Activated CD8-positive, alpha-beta memory T cell treated with anti-CD3 and anti-CD28 coated beads, Interleukin-2, amount 10 ng/mL, durations not matched to agents 7 days and 5 days (primary cell): ENCODE measurements at regions of chr6 and their contacts with region 1.

Region 1: DNA sequence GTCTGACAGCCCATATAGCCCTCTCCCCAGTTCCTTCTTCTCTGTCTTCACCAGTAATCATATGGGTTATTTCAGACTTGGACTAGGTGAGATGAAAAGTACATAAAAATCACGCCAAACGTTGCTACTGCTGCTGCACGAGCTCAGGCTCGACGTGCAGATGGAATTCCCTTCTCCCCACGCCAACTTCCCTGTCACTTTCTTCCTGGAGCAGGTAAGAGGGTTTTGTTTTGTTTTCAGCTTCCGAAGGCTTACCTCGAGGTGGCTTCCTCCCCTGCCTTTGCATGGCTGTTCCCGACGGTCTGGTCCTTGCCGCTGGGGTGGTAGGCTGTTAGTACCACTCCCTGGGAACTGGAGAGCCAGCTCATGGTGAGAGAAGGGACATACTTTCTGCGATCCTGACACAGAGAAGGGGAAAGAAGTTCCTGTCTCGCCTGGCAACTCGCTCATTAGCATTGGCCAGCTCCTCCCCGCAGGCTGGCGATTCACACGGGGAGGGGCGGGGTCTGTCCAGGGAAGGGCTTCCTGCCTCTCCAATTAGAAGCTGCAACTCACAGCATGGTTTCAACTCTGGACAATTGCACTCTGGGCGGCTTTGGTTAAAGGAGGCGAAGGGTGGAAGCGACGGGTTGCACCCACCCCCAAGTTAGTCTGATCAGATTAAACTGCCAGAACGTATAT is at the start of gene ARHGAP18:
- DNase-seq: peak; percentile 90
- ATAC-seq: peak; percentile 97
- H3K4me3 Mint-ChIP-seq: peak within 1 kb of the TSS; percentile 92
- H3K27ac Mint-ChIP-seq: peak within 1 kb of the TSS; percentile 87
- H3K4me1 Mint-ChIP-seq: peaks cover 49% of the 10 kb centered on the region
- H3K27me3 Mint-ChIP-seq: no peaks in the 10 kb centered on the region
- total RNA-seq, gene ARHGAP18: 14.1 to 20.8 TPM

Region 2: GRCh38 chr6:129672881-129673643 is 36.8 kb before region 1 on chr6:
- CTCF ChIA-PET with region 1: interaction called, 10 read pairs
- DNase-seq: peak; percentile 62
- ATAC-seq: peak; percentile 69
- H3K4me3 Mint-ChIP-seq: peak overlapping the region; percentile 71
- H3K27ac Mint-ChIP-seq: peak overlapping the region; percentile 95
- H3K4me1 Mint-ChIP-seq: peaks cover 55% of the 10 kb centered on the region
- H3K27me3 Mint-ChIP-seq: no peaks in the 10 kb centered on the region

Region 3: DNA sequence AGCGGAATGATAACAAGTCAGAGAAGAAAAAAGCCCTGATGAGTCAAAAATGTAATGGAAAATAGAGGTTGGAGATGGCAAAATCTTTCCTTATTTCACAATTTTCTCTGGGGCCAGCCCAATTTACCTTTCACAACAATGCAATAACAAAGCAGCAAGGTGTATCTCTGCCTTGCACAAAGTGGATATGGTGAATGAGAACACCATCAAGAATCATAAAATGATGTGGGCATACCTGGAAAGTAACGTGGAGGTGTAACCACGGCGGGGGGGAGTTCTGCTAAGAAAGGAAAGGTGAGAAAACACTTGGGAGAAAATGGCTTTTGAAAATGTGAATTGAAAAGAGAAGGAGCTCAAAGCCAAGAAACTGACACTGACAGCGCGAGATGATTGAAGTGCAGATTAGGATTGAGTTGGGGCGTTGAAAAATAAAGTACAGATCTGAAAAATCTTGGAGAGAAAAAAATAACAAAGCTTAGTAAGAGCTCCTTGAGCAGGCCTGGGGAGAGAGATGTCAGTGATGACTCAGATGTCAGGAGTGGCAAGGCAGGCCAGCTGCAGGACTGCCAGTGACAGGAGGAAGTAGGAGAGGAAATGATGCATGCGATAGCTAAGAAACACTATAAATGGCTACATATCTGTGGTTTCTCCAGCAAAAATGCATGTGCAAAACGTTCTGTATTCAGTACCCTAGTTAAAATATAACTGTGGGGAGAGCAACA is 26.1 kb before region 1 on chr6:
- CTCF ChIA-PET with region 1: interaction called, 26 read pairs
- DNase-seq: peak; percentile 84
- ATAC-seq: peak; percentile 95
- H3K4me3 Mint-ChIP-seq: peak overlapping the region; percentile 41
- H3K27ac Mint-ChIP-seq: peak overlapping the region; percentile 87
- H3K4me1 Mint-ChIP-seq: peaks cover 63% of the 10 kb centered on the region
- H3K27me3 Mint-ChIP-seq: no peaks in the 10 kb centered on the region

Region 4: DNA sequence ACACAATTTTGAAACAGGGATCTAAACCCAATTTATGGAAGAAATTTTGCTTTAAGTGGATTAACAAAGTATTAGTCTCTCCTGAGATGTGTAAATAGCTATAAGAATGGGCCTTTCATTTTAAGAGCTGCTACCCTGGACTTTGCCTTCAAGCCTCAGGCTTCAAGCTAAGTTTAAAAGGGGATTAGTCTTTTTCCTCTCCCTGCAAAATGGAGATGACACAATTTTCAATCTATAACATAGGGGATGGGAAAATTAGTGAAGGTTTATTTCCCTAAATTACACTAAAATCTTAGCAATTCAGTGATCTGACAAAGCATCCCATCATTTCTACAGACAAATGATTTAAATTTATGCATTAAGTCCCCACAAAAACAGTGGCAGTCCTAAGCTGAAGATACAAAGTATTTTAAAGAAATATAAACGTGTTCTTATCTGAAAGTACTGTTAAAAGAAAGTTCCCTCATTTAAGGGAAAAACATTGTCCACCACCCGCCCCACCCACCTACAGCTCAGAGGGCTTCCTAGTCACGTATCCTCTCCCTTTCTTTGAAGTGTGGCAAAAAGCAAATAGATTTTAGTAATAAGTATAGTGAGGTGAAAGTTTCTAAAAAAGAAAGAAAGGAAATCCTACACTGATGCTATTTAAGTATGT is 14.4 kb before region 1 on chr6:
- CTCF ChIA-PET with region 1: interaction called, 11 read pairs
- DNase-seq: peak; percentile 56
- ATAC-seq: peak; percentile 85
- H3K4me3 Mint-ChIP-seq: peak overlapping the region; percentile 15
- H3K27ac Mint-ChIP-seq: peak overlapping the region; percentile 55
- H3K4me1 Mint-ChIP-seq: peaks cover 62% of the 10 kb centered on the region
- H3K27me3 Mint-ChIP-seq: no peaks in the 10 kb centered on the region